Right ventricle myocardium superior (tissue), 1 donor: ENCODE measurements at regions of chr6 and their contacts with region 1.

Region 1: GRCh38 chr6:143026696-143027449 is 33.8 kb upstream of the AIG1 start:
- DNase-seq: peak; percentile 53
- ATAC-seq: peak; percentile 78

Region 2: DNA sequence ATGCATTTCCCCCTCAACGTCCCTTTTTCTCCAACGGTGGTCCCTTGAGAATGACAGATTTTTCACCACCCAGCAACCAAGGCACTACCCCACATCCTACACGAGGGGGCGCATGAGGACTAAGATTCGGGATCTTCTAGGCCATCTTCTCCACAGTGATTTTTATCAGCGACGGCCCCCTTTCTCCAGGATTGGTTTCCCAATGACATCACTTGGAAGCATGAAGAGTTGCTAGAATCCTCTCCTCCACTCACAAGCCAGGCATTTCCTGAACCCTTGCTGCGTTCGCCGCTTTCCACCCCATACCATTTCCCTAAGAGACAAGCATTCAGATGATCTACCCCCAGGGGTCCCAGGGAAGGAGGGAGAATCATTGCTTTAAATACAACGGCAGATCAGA is 333.9 kb before region 1 on chr6:
- intact Hi-C with region 1: loop called (anchors 2 kb)
- DNase-seq: peak; percentile 66
- ATAC-seq: peak; percentile 89

Region 3: GRCh38 chr6:142773859-142774648 is 252.8 kb before region 1 on chr6:
- intact Hi-C with region 1: no loop called
- DNase-seq: no peak
- ATAC-seq: no peak

Region 4: DNA sequence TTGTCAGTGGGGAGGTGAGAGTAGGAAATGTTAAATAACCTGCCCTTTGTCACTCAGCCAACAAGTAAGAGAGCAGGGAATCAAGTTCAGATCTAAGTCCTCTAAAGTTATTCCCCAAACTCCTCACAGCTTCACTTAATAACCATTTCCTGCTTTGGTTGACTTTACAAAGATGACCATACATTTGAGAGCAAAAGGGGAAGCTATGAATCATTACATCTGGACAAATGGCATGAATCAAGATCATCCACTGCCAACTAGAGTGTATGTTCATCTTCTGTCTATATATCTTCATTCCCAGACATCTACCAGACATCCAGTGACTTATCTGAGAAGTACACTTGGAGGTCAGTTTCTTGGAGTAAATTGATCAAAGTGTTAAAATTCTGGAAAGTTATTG is 66.8 kb before region 1 on chr6:
- intact Hi-C with region 1: loop called (anchors 10 kb)
- DNase-seq: no peak
- ATAC-seq: no peak

Region 5: GRCh38 chr6:143592335-143592734 is 565.5 kb after region 1 on chr6:
- intact Hi-C with region 1: no loop called
- DNase-seq: no peak
- ATAC-seq: no peak